ENCODE measurements at regions of chr2 and their contacts with region 1.

Region 1: GRCh38 chr2:25700221-25700660 is 26.9 kb upstream of the DTNB start:
- DNase-seq: peak; percentile 49 to 61 (median 59)
- H3K4me3 ChIP-seq: no peak overlapping the region
- H3K27ac ChIP-seq: no peak overlapping the region
- H3K4me1 ChIP-seq: peaks cover 0 to 11% (median 4%) of the 10 kb centered on the region in 4 experiments
- H3K27me3 ChIP-seq: no peaks in the 10 kb centered on the region

Region 2: DNA sequence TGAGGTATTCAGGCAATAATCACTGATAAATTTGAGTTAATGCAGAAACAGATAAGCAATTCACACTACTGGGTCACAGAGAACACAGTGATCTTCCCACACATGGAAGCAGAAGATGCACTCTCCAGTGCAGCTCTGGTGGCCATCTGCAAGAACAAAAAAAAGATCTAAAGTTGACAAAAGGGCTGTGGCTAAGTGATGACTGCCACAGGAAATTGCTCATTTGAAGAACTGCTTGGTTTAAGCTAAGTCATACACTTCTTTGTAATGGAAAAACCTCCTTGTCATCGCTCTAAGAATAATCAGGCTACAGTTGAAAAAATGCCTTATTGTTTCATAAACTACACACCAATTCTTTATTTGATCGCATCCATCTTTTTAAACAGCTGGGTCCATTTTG is 142.0 kb before region 1 on chr2:
- CTCF ChIA-PET with region 1: no interaction called
- POLR2A ChIA-PET with region 1: no interaction called
- DNase-seq: peak; percentile 86 to 98 (median 95)
- H3K4me3 ChIP-seq: peak overlapping the region in 1 of 7 experiments; percentile 43
- H3K27ac ChIP-seq: peak overlapping the region; percentile 37 to 77
- H3K4me1 ChIP-seq: peaks cover 5 to 43% (median 19%) of the 10 kb centered on the region in 4 experiments
- H3K27me3 ChIP-seq: no peaks in the 10 kb centered on the region

Region 3: DNA sequence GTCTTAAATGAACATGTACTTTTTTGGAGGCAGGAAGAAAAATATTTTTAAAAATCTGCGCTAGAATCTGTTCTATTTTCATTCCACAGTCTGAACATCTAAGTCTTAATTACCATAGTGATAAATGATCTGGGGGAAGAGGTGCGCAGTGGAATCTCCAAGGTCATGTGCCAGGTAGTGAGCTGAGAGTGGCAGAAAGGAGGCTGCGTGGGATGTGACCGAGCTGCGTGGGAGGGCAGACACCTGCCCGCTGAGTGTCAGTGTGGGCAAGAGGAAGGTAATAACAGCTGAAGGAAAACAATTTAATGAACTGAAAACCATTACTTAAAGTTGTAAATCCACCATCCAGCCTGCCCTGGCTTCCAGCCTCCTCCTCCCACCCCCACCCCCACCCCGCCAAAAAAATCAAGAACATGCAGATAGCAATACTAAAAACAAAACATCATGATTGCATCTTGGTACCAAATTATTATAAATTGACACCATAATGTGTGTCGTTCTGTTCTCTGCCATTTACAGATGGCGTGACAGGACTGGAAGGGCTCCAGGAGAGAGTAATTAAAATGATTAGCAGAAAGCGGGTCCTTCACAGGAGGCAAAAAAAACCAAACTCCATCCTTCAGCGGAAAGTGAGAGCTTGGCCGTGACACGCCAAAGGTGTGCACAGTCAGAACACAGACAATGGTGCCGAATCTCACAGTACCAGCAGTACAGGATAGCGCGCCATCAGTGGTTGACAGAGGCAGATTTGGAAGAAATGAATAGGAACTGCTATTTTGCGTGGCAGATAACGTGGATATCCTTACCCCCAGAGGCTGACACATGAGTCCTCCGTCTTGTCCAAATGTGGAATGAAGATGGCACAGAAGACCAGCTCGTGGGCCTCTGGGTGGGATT is 15.4 kb before region 1 on chr2:
- CTCF ChIA-PET with region 1: interaction called, 34 read pairs
- POLR2A ChIA-PET with region 1: no interaction called
- DNase-seq: no peak
- H3K4me3 ChIP-seq: no peak overlapping the region
- H3K27ac ChIP-seq: no peak overlapping the region
- H3K4me1 ChIP-seq: no peaks in the 10 kb centered on the region
- H3K27me3 ChIP-seq: peaks cover 0 to 3% (median 0%) of the 10 kb centered on the region in 5 experiments

Region 4: DNA sequence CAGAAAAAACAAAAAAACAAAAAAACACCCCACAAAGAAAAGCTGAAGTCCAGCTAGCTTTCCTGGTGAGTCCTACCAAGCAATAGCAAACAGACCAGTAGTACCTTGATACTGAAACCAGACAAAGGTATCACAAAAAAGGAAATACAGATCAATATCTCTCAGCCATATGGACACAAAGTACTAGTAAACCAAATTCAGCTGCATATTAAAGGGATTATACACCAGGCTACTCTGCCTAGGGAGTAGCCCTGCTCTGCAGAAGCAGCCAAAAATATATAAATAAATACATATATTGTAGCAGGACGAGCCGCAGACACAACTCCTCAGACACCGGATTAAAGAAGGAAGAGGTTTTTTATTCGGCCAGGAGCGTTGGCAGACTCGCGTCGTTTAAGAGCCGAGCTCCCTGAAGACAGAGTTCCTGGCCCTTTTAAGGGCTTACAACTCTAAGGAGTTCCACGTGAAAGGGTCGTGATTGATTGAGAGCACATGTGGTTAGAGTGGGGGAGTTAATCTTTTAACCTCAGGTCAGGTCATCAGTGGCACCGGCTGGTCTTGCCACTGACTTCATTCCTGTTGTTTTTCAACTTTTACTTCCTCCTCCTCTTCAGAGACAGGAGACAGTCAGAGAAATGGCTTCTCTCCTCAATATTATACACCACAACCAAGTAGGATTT is 11.6 kb after region 1 on chr2:
- CTCF ChIA-PET with region 1: interaction called, 19 read pairs
- POLR2A ChIA-PET with region 1: no interaction called
- DNase-seq: peak in 2 of 3 donors; percentile 33 to 45
- H3K4me3 ChIP-seq: peak overlapping the region in 6 of 7 experiments; percentile 43 to 73 (median 60)
- H3K27ac ChIP-seq: no peak overlapping the region
- H3K4me1 ChIP-seq: peaks cover 0 to 10% (median 7%) of the 10 kb centered on the region in 4 experiments
- H3K27me3 ChIP-seq: peaks cover 0 to 2% (median 0%) of the 10 kb centered on the region in 5 experiments